AG04450 (cell line): ENCODE measurements at regions of chr7 and their contacts with region 1.

Region 1: GRCh38 chr7:1473864-1474512 is 14.7 kb upstream of the MICALL2 start:
- DNase-seq: peak; percentile 67
- H3K4me3 ChIP-seq: no peak overlapping the region
- H3K27ac ChIP-seq: no peak overlapping the region
- H3K27me3 ChIP-seq: no peaks in the 10 kb centered on the region
- CTCF ChIP-seq: peak; percentile 85

Region 2: GRCh38 chr7:1193593-1194424 is 280.2 kb before region 1 on chr7:
- CTCF ChIA-PET with region 1: interaction called, 13 read pairs
- POLR2A ChIA-PET with region 1: no interaction called
- DNase-seq: no peak
- H3K4me3 ChIP-seq: no peak overlapping the region
- H3K27ac ChIP-seq: no peak overlapping the region
- H3K27me3 ChIP-seq: peaks cover 3% of the 10 kb centered on the region
- CTCF ChIP-seq: peak; percentile 43

Region 3: GRCh38 chr7:1432411-1433082 is 41.4 kb before region 1 on chr7:
- CTCF ChIA-PET with region 1: interaction called, 13 read pairs
- POLR2A ChIA-PET with region 1: no interaction called
- DNase-seq: no peak
- H3K4me3 ChIP-seq: no peak overlapping the region
- H3K27ac ChIP-seq: no peak overlapping the region
- H3K27me3 ChIP-seq: no peaks in the 10 kb centered on the region
- CTCF ChIP-seq: peak; percentile 94

Region 4: DNA sequence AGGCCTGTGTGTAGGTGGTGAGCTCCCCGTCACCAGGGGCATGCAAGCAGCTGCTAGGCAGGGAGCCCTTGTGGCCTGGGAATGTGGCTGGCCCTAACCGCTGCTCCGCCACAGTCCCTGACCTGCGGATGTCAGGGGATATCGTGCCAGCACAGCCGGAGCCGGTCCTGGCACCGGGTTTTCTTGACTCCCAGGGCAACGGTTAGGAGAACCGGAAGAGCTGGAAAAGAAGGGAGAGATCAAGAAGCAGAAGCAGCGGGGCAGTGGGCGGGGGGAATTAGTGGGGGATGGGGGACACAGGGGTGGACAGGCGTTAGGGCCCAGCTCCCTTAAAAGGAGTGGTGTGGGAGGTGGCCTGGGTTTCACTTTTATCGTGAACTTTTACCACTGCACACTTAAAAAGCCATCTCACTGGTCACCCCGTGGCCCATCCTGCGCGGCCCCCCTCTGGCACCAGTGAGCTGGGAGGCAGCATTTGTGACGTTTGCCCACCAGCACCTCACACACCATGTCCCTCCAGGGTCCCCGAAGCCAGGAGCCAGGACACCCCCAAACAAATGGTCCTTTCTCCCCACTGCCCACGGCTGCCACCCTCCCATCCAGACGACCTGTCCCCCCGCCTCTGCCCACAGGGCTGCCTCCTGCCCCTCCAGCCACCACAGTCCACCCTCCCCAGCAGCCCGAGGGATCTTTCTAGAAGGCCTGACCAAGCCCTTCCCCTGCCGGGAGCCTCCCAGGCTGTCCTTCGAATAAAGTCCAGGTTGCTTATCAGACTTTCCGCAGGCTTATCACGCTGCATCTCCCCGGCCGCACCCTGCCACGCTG is 13.0 kb before region 1 on chr7:
- CTCF ChIA-PET with region 1: interaction called, 11 read pairs
- POLR2A ChIA-PET with region 1: interaction called, 5 read pairs
- DNase-seq: no peak
- H3K4me3 ChIP-seq: peak overlapping the region; percentile 58
- H3K27ac ChIP-seq: no peak overlapping the region
- H3K27me3 ChIP-seq: peaks cover 3% of the 10 kb centered on the region
- CTCF ChIP-seq: no peak